Heart left ventricle (tissue), 16 donors: ENCODE measurements at regions of chr11 and their contacts with region 1.

Region 1: DNA sequence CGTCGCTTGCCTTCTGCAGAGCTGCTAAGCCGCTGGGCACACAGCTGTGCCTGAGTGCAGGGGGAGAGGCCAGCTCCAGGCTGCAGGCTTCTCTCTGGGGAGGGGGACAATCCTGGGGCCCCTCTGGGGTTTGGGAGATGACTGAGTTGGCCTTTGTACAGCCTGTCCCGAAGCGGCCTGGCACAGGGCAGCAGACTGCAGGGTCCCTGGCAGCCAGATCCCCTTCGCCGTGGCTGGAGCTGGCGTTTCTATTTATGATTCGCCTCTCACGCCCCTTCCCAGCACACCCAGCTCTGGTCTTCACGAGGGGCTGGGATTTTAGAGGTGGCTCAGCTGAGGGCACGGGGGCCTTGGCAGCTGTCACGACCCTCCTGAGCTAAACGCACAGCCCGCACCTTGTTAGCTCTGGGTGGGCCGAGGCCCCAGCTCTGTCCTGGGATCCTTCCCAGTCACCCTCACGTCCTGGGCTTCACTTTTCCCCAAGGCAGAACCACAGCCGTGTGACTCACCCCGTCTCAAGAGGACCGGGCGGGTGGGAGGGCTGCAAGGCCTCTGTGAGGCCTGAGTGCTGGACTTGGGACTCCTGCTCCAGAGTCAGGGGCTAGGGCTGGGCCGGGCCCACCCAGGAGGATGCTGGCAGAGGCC is 18.4 kb downstream of the OSBPL5 start:
- DNase-seq: peak in 1 of 5 donors; percentile 63
- ATAC-seq: peak; percentile 34 to 78 (median 42)
- H3K4me3 ChIP-seq: no peak overlapping the region
- H3K27ac ChIP-seq: peak overlapping the region in 11 of 12 donors; percentile 3 to 77 (median 62)
- H3K4me1 ChIP-seq: peaks cover 0 to 54% (median 39%) of the 10 kb centered on the region in 12 donors
- H3K27me3 ChIP-seq: no peaks in the 10 kb centered on the region
- CTCF ChIP-seq: no peak
- POLR2A ChIP-seq: no peak

Region 2: GRCh38 chr11:3189196-3189843 is 42.6 kb after region 1 on chr11:
- intact Hi-C with region 1: loop called in 1 of 10 experiments (anchors 5 kb)
- DNase-seq: peak in 1 of 5 donors; percentile 23
- ATAC-seq: no peak
- H3K4me3 ChIP-seq: no peak overlapping the region
- H3K27ac ChIP-seq: no peak overlapping the region
- H3K4me1 ChIP-seq: no peaks in the 10 kb centered on the region
- H3K27me3 ChIP-seq: no peaks in the 10 kb centered on the region
- CTCF ChIP-seq: no peak
- POLR2A ChIP-seq: no peak

Region 3: DNA sequence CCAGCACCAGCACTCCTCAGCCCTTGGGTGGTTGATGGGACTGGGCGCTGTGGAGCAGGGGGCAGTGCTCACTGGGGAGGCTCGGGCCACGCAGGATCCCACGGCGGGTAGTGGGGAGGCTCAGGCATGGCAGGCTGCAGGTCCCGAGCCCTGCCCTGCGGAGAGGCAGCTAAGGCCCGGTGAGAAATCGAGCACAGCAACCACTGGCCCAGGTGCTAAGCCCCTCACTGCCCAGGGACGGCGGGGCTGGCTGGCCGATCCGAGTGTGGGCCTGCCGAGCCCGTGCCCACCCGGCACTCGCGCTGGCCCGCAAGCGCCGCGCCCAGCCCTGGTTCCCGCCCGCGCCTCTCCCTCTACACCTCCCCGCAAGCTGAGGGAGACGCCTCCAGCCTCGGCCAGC is 288.2 kb after region 1 on chr11:
- intact Hi-C with region 1: no loop called
- DNase-seq: no peak
- ATAC-seq: peak in 1 of 4 donors; percentile 27
- H3K4me3 ChIP-seq: no peak overlapping the region
- H3K27ac ChIP-seq: no peak overlapping the region
- H3K4me1 ChIP-seq: no peaks in the 10 kb centered on the region
- H3K27me3 ChIP-seq: peaks cover 0 to 4% (median 0%) of the 10 kb centered on the region in 9 donors
- CTCF ChIP-seq: no peak
- POLR2A ChIP-seq: no peak